IMR-90 (cell line): ENCODE measurements at regions of chr9 and their contacts with region 1.

Region 1: GRCh38 chr9:94228616-94229015 is 30.5 kb upstream of the ZNF169 start:
- DNase-seq: no peak
- ATAC-seq: no peak
- H3K4me3 ChIP-seq: no peak overlapping the region
- H3K27ac ChIP-seq: no peak overlapping the region
- H3K4me1 ChIP-seq: no peaks in the 10 kb centered on the region
- H3K27me3 ChIP-seq: no peaks in the 10 kb centered on the region
- CTCF ChIP-seq: no peak
- POLR2A ChIP-seq: no peak
- RAD21 ChIP-seq: no peak

Region 2: GRCh38 chr9:93634311-93635185 is 594.1 kb before region 1 on chr9:
- CTCF ChIA-PET with region 1: no interaction called
- POLR2A ChIA-PET with region 1: no interaction called
- dilution Hi-C with region 1: no loop called
- in situ Hi-C with region 1: no loop called
- intact Hi-C with region 1: no loop called
- DNase-seq: no peak
- ATAC-seq: no peak
- H3K4me3 ChIP-seq: no peak overlapping the region
- H3K27ac ChIP-seq: no peak overlapping the region
- H3K4me1 ChIP-seq: no peaks in the 10 kb centered on the region
- H3K27me3 ChIP-seq: no peaks in the 10 kb centered on the region
- CTCF ChIP-seq: no peak
- POLR2A ChIP-seq: no peak
- RAD21 ChIP-seq: no peak

Region 3: DNA sequence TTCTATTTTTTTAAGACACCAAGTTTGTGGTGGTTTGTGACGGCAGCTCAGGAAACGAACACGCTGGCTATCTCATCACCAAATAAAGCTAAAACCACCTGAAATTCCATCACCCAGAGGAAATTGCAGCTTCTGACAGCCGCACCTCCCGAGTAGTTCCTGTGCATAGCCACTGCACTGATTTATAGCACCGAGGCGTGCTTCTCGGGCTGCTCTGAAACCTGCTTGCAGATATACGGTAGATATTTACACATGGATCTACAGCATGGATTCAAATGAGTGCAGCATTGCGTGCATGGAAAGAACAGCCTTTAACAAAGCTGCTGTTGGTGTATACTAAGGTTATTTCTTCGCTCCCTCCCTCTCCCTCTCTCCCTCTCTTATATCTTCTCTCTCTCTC is 498.4 kb before region 1 on chr9:
- CTCF ChIA-PET with region 1: no interaction called
- POLR2A ChIA-PET with region 1: no interaction called
- dilution Hi-C with region 1: no loop called
- in situ Hi-C with region 1: loop called (anchors 25 kb)
- intact Hi-C with region 1: no loop called
- DNase-seq: no peak
- ATAC-seq: no peak
- H3K4me3 ChIP-seq: no peak overlapping the region
- H3K27ac ChIP-seq: no peak overlapping the region
- H3K4me1 ChIP-seq: no peaks in the 10 kb centered on the region
- H3K27me3 ChIP-seq: no peaks in the 10 kb centered on the region
- CTCF ChIP-seq: no peak
- POLR2A ChIP-seq: no peak
- RAD21 ChIP-seq: no peak

Region 4: DNA sequence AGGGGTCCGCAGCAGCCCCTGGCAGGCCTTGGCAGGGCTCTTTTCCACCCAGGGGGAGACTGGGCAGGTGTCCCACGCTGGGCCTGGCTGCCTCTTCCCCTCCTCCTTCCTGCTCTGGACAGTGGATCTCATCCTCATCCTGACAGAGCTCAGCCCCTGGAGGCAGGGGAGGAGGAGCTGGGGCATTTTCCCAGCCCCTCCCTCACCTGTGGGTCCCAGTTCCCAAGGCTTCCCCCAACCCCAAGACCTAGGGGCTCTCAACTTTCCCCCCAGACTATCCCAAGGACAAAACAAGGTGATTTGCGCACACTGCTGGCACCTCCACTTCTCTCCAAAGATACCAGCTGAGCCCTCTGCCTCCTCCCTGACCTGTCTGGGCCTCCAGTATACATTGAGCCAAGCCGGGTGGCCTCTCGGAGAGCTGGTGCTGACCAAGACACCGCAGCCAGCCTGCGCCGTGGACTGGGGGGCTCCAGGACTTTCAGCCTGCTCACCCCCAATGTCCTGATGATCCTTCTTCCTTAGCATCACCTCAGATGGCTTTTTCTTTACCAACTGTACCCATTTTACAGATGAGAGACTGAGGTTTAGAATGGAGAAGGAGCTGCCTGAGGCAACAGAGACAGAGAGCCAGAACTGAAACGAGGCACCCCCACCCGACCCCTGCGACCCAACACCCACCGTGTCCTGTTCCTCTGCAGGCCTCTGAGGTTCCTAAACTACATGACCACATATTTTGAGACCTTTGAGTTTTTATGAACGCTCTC is 400.1 kb before region 1 on chr9:
- CTCF ChIA-PET with region 1: no interaction called
- POLR2A ChIA-PET with region 1: no interaction called
- dilution Hi-C with region 1: no loop called
- in situ Hi-C with region 1: no loop called
- intact Hi-C with region 1: no loop called
- DNase-seq: no peak
- ATAC-seq: no peak
- H3K4me3 ChIP-seq: no peak overlapping the region
- H3K27ac ChIP-seq: no peak overlapping the region
- H3K4me1 ChIP-seq: no peaks in the 10 kb centered on the region
- H3K27me3 ChIP-seq: peaks cover 9% of the 10 kb centered on the region; the same call in 1 of the 2 replicates
- CTCF ChIP-seq: no peak
- POLR2A ChIP-seq: no peak
- RAD21 ChIP-seq: no peak

Region 5: GRCh38 chr9:93860694-93861658 is 367.6 kb before region 1 on chr9:
- CTCF ChIA-PET with region 1: no interaction called
- POLR2A ChIA-PET with region 1: no interaction called
- dilution Hi-C with region 1: no loop called
- in situ Hi-C with region 1: loop called (anchors 25 kb)
- intact Hi-C with region 1: no loop called
- DNase-seq: no peak
- ATAC-seq: no peak
- H3K4me3 ChIP-seq: no peak overlapping the region
- H3K27ac ChIP-seq: no peak overlapping the region
- H3K4me1 ChIP-seq: no peaks in the 10 kb centered on the region
- H3K27me3 ChIP-seq: peaks cover 4% of the 10 kb centered on the region; the same call in 1 of the 2 replicates
- CTCF ChIP-seq: no peak
- POLR2A ChIP-seq: no peak
- RAD21 ChIP-seq: no peak